ENCODE measurements at regions of chr2 and their contacts with region 1.

Region 1: DNA sequence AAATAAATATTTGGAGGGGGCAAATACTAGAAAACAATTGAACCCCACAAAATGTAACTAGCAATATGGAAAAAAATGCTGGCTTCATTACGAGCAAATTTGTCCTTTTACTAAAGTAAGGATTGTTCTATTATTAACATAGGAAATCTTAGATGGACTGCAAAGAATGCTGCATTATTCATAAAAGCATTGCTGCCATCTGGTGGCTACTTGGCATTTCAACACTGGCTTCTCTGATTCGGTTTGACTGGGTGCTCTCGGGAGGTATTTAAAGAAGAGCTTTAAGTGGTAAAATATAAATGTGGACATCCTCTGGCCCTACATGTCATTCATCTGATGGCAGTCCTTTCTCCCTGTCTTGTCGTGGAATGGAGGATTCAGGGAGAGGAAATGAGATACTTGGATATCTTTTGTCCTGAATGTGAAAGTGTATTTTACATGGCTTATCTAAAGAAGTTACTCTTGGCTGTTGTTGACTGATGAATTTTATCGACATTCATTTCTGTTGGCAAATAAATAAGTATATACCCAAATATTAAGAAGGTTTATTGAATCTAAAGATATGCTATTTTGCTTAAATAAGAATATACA is 130.2 kb downstream of the ARHGAP15 start:
- DNase-seq: peak; percentile 81
- ATAC-seq: no peak
- H3K4me3 Mint-ChIP-seq: peak overlapping the region; percentile 53
- H3K27ac Mint-ChIP-seq: peak overlapping the region; percentile 72
- H3K4me1 Mint-ChIP-seq: peaks cover 78% of the 10 kb centered on the region
- H3K27me3 Mint-ChIP-seq: no peaks in the 10 kb centered on the region

Region 2: DNA sequence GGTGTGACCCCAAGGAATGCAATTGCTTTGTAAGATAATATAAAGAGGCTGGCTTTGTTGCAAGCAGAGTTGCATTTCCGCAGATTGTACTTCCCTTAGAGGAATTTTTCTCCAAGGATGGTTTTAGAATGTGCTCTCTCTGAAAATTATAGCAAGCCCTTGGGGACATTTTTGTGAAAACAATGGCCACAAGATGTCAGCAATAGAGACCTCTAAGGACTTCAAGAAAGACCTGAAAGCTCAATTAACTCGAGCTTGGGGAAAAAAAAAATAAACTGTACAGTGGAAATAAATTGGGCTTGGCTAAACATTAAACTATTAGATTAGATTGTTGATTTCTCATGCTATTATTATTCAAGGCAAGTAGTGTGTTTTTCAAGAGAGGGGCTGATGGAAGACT is 463.3 kb before region 1 on chr2:
- CTCF ChIA-PET with region 1: no interaction called
- POLR2A ChIA-PET with region 1: no interaction called
- intact Hi-C with region 1: no loop called
- DNase-seq: no peak
- ATAC-seq: no peak
- H3K4me3 Mint-ChIP-seq: no peak overlapping the region
- H3K27ac Mint-ChIP-seq: no peak overlapping the region
- H3K4me1 Mint-ChIP-seq: no peaks in the 10 kb centered on the region
- H3K27me3 Mint-ChIP-seq: no peaks in the 10 kb centered on the region

Region 3: DNA sequence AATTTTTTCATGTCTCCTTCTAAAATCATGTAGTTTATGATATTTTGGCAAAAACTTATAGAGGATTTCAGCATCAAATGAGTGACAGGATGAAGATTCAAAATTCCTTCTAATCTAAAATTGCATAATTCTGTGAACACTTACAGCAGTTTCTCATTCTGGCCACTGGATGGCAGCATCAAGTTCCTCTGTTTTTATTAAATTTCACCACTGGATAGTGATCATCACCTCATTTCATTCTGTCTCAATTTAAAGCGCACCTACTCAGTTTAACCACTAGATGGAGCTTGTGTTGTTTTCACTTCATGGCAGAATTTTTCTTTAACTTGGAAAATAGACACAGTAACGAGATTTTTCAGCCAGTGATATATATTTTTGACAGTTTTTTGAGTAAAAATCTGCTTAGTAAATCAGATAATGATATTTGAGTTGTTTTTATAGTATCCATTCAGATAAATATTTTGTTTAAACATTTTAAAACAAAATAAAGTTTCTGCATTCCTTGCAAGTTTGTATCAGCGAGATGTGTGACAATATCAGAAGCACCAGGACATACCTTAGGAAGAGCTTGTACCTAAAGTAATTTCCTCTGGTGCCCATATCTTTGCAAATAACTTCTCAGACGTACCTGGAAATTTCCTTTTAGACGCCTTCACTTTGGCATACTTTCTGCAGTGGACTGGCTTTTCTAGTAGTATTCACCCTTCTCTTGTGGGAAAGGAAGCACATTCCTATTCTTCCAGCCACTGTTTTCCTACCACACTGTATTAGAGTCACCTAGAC is 225.0 kb before region 1 on chr2:
- CTCF ChIA-PET with region 1: interaction called, 24 read pairs
- POLR2A ChIA-PET with region 1: no interaction called
- intact Hi-C with region 1: loop called (anchors 1 kb)
- DNase-seq: peak; percentile 68
- ATAC-seq: peak; percentile 90
- H3K4me3 Mint-ChIP-seq: no peak overlapping the region
- H3K27ac Mint-ChIP-seq: no peak overlapping the region
- H3K4me1 Mint-ChIP-seq: peaks cover 9% of the 10 kb centered on the region
- H3K27me3 Mint-ChIP-seq: peaks cover 2% of the 10 kb centered on the region

Region 4: GRCh38 chr2:143140864-143141661 is 118.4 kb before region 1 on chr2:
- CTCF ChIA-PET with region 1: interaction called, 11 read pairs
- POLR2A ChIA-PET with region 1: no interaction called
- intact Hi-C with region 1: no loop called
- DNase-seq: peak; percentile 26
- ATAC-seq: peak; percentile 63
- H3K4me3 Mint-ChIP-seq: peak overlapping the region; percentile 62
- H3K27ac Mint-ChIP-seq: peak overlapping the region; percentile 28
- H3K4me1 Mint-ChIP-seq: peaks cover 89% of the 10 kb centered on the region
- H3K27me3 Mint-ChIP-seq: no peaks in the 10 kb centered on the region

Region 5: DNA sequence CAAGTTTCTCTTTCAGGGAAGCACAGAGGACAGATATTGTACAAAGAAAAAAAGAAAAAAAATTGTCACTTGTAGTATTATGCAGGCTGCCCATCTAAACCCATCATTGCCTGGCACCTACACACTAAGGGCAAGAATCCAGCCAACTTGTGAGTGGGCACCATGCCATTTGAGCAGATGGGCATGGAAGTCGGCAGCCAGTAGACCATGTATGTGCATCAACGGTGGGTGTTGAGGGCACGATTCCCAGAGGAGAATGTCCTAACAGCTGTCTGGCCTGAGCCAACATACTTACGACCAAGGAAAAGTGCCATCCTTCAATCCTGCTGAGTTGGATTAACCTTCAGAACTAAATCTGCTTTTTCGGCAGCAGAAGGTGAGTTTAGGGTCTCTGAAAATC is 66.3 kb before region 1 on chr2:
- CTCF ChIA-PET with region 1: interaction called, 11 read pairs
- POLR2A ChIA-PET with region 1: no interaction called
- intact Hi-C with region 1: no loop called
- DNase-seq: no peak
- ATAC-seq: no peak
- H3K4me3 Mint-ChIP-seq: no peak overlapping the region
- H3K27ac Mint-ChIP-seq: no peak overlapping the region
- H3K4me1 Mint-ChIP-seq: peaks cover 32% of the 10 kb centered on the region
- H3K27me3 Mint-ChIP-seq: no peaks in the 10 kb centered on the region

Region 6: GRCh38 chr2:143223556-143223955 is 35.9 kb before region 1 on chr2:
- CTCF ChIA-PET with region 1: interaction called, 14 read pairs
- POLR2A ChIA-PET with region 1: no interaction called
- intact Hi-C with region 1: loop called in 1 of 2 experiments (anchors 2 kb)
- DNase-seq: no peak
- ATAC-seq: no peak
- H3K4me3 Mint-ChIP-seq: no peak overlapping the region
- H3K27ac Mint-ChIP-seq: no peak overlapping the region
- H3K4me1 Mint-ChIP-seq: peaks cover 47% of the 10 kb centered on the region
- H3K27me3 Mint-ChIP-seq: no peaks in the 10 kb centered on the region

Region 7: DNA sequence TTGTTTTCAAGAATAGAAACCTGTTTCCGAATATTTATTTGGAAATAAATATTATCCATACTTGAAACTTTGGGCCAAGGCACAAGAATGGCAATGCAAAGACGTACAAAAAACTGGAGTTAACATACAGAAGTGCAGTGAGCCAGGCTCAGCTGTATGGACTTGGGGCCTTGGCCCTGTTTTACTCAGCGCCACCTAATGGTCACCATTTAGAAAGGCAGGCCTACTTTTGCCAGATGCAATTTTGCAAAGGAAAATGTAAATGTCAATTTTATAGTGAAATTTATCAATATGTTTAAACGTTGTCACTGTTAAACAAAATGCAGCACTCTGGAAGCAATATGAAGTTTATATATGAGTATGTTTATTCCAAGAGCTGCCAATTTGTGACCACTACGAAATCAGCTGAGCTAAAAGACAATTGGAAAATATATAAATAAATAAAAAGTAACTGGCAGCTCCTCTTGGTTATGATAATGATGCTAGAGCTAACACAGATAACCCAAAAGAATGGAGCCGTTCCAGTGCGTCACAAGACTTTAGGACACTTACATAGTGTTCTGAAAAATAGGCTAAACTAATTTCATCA is 24.7 kb after region 1 on chr2:
- CTCF ChIA-PET with region 1: interaction called, 22 read pairs
- POLR2A ChIA-PET with region 1: interaction called, 3 read pairs
- intact Hi-C with region 1: no loop called
- DNase-seq: peak; percentile 42
- ATAC-seq: peak; percentile 67
- H3K4me3 Mint-ChIP-seq: no peak overlapping the region
- H3K27ac Mint-ChIP-seq: peak overlapping the region; percentile 3
- H3K4me1 Mint-ChIP-seq: peaks cover 27% of the 10 kb centered on the region
- H3K27me3 Mint-ChIP-seq: no peaks in the 10 kb centered on the region

Region 8: GRCh38 chr2:143705108-143705686 is 445.7 kb after region 1 on chr2:
- CTCF ChIA-PET with region 1: no interaction called
- POLR2A ChIA-PET with region 1: no interaction called
- intact Hi-C with region 1: loop called in 1 of 2 experiments (anchors 5 kb)
- DNase-seq: no peak
- ATAC-seq: peak; percentile 35
- H3K4me3 Mint-ChIP-seq: no peak overlapping the region
- H3K27ac Mint-ChIP-seq: peak overlapping the region; percentile 25
- H3K4me1 Mint-ChIP-seq: peaks cover 43% of the 10 kb centered on the region
- H3K27me3 Mint-ChIP-seq: no peaks in the 10 kb centered on the region